ENCODE measurements at regions of chr1 and their contacts with region 1.

Region 1: GRCh38 chr1:173202430-173203145 is 4.5 kb downstream of the TNFSF4 start:
- DNase-seq: peak; percentile 74
- H3K4me3 ChIP-seq: peak overlapping the region; percentile 35
- H3K27ac ChIP-seq: peak overlapping the region; percentile 59
- H3K27me3 ChIP-seq: no peaks in the 10 kb centered on the region
- CTCF ChIP-seq: peak; percentile 76

Region 2: GRCh38 chr1:172818841-172819527 is 383.6 kb before region 1 on chr1:
- CTCF ChIA-PET with region 1: interaction called, 11 read pairs
- POLR2A ChIA-PET with region 1: no interaction called
- DNase-seq: no peak
- H3K4me3 ChIP-seq: no peak overlapping the region
- H3K27ac ChIP-seq: no peak overlapping the region
- H3K27me3 ChIP-seq: no peaks in the 10 kb centered on the region
- CTCF ChIP-seq: no peak

Region 3: GRCh38 chr1:172826096-172826743 is 376.4 kb before region 1 on chr1:
- CTCF ChIA-PET with region 1: interaction called, 154 read pairs
- POLR2A ChIA-PET with region 1: interaction called, 10 read pairs
- DNase-seq: peak; percentile 80
- H3K4me3 ChIP-seq: no peak overlapping the region
- H3K27ac ChIP-seq: peak overlapping the region; percentile 59
- H3K27me3 ChIP-seq: no peaks in the 10 kb centered on the region
- CTCF ChIP-seq: peak; percentile 72

Region 4: GRCh38 chr1:172834609-172835008 is 368.0 kb before region 1 on chr1:
- CTCF ChIA-PET with region 1: interaction called, 11 read pairs
- POLR2A ChIA-PET with region 1: no interaction called
- DNase-seq: no peak
- H3K4me3 ChIP-seq: no peak overlapping the region
- H3K27ac ChIP-seq: no peak overlapping the region
- H3K27me3 ChIP-seq: no peaks in the 10 kb centered on the region
- CTCF ChIP-seq: no peak

Region 5: GRCh38 chr1:172909606-172910326 is 292.8 kb before region 1 on chr1:
- CTCF ChIA-PET with region 1: interaction called, 10 read pairs
- POLR2A ChIA-PET with region 1: interaction called, 11 read pairs
- DNase-seq: peak; percentile 99
- H3K4me3 ChIP-seq: peak overlapping the region; percentile 35
- H3K27ac ChIP-seq: peak overlapping the region; percentile 97
- H3K27me3 ChIP-seq: no peaks in the 10 kb centered on the region
- CTCF ChIP-seq: no peak

Region 6: GRCh38 chr1:173190101-173190906 is 12.3 kb before region 1 on chr1:
- CTCF ChIA-PET with region 1: interaction called, 15 read pairs
- POLR2A ChIA-PET with region 1: no interaction called
- DNase-seq: no peak
- H3K4me3 ChIP-seq: no peak overlapping the region
- H3K27ac ChIP-seq: peak overlapping the region; percentile 22
- H3K27me3 ChIP-seq: no peaks in the 10 kb centered on the region
- CTCF ChIP-seq: no peak

Region 7: DNA sequence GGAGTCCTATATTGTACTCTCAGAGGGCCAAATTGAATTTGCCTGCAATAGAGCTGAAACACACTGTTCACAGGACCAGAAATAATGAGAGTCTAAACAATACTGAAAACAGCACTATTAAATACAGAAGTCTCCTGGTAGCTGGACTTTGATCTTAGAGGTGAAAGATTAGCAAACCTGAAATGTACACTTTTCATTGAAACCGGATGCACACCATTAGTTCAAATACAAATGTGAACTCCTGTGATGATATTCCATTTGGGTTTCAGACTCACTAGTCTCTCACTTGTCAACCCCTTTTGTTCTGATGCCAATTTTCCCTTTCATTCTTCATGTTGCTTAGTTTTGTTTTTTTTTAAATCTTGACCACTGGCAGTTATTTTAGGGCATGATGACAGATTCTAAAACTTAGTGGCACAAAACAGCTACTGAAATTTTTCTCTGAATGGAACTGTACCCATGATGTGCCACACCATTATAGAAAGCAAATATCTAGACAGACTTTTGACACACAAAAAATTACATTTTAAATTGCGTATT is 10.4 kb after region 1 on chr1:
- CTCF ChIA-PET with region 1: interaction called, 10 read pairs
- POLR2A ChIA-PET with region 1: no interaction called
- DNase-seq: no peak
- H3K4me3 ChIP-seq: no peak overlapping the region
- H3K27ac ChIP-seq: no peak overlapping the region
- H3K27me3 ChIP-seq: no peaks in the 10 kb centered on the region
- CTCF ChIP-seq: no peak

Measured in AG04450 (cell line).